CD8-positive, alpha-beta T cell (primary cell): ENCODE measurements at regions of chr12 and their contacts with region 1.

Region 1: GRCh38 chr12:52050761-52051541 is at the start of gene NR4A1:
- DNase-seq: peak; percentile 97 to 100 (median 99)
- ATAC-seq: peak; percentile 90
- H3K4me3 ChIP-seq: peak within 1 kb of the TSS; percentile 80 to 87
- H3K4me3 Mint-ChIP-seq: peak within 1 kb of the TSS; percentile 97
- H3K27ac ChIP-seq: peak within 1 kb of the TSS; percentile 81 to 99
- H3K27ac Mint-ChIP-seq: peak within 1 kb of the TSS; percentile 99
- H3K4me1 ChIP-seq: peaks cover 30% of the 10 kb centered on the region
- H3K4me1 Mint-ChIP-seq: peaks cover 35% of the 10 kb centered on the region
- H3K27me3 ChIP-seq: no peaks in the 10 kb centered on the region
- H3K27me3 Mint-ChIP-seq: peaks cover 3% of the 10 kb centered on the region
- CTCF ChIP-seq: no peak
- total RNA-seq, gene NR4A1: 59.7 to 60.0 TPM

Region 2: DNA sequence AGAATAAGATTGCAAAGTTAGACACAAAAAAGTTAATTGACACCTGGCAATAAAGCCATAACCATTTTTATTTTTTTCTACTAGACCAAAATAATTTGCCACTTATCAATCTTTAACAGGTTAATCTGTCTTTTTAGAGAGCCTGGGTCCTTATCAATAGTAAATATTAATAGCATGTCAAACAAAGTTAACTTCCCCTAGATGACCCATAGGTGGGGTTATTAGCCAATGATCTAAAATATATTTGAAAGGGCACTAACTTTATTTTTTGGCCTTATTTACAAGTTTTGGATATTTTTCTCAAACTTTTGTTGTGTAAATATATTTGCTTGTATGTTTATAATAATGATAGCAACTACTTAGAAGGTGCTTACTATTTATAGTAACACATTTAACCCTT is 159.1 kb before region 1 on chr12:
- CTCF ChIA-PET with region 1: no interaction called
- POLR2A ChIA-PET with region 1: no interaction called
- intact Hi-C with region 1: no loop called
- DNase-seq: no peak
- ATAC-seq: no peak
- H3K4me3 ChIP-seq: no peak overlapping the region
- H3K4me3 Mint-ChIP-seq: no peak overlapping the region
- H3K27ac ChIP-seq: no peak overlapping the region
- H3K27ac Mint-ChIP-seq: no peak overlapping the region
- H3K4me1 ChIP-seq: no peaks in the 10 kb centered on the region
- H3K4me1 Mint-ChIP-seq: no peaks in the 10 kb centered on the region
- H3K27me3 ChIP-seq: no peaks in the 10 kb centered on the region
- H3K27me3 Mint-ChIP-seq: peaks cover 2% of the 10 kb centered on the region
- CTCF ChIP-seq: no peak

Region 3: DNA sequence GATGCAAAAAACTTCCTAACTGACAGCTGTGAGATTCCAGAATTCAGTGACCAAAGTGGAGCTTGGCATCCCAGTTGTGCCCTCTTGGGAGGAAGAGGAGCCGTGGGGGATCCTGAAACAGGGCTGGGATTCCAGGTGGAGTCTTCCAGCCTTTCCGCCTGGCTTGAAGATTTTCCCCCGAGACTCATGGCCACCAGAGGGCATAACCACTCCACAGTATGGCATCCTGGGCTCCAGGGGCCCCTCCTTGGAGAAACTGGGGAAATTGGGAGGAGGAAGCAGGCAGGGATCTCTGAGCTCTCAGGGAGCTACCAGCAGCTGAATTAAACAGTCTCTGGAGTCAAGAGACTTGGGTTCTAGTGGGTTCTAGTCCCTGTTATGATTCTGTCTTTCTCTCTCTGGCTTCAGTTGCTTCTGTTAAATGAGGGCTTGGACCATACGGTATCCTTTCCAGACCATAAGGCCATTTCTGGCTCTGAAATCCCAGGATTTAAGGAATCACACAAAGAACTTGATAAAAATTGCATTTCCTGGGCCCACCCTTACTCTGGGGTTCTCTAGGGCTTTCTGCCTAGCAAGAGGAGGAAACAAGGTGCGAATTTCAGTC is 46.8 kb before region 1 on chr12:
- CTCF ChIA-PET with region 1: interaction called, 1,615 read pairs
- POLR2A ChIA-PET with region 1: interaction called, 3 read pairs
- intact Hi-C with region 1: loop called (anchors 1 kb)
- DNase-seq: peak in 2 of 9 experiments; percentile 33 to 48
- ATAC-seq: no peak
- H3K4me3 ChIP-seq: no peak overlapping the region
- H3K4me3 Mint-ChIP-seq: no peak overlapping the region
- H3K27ac ChIP-seq: no peak overlapping the region
- H3K27ac Mint-ChIP-seq: no peak overlapping the region
- H3K4me1 ChIP-seq: peaks cover 20% of the 10 kb centered on the region
- H3K4me1 Mint-ChIP-seq: peaks cover 18% of the 10 kb centered on the region
- H3K27me3 ChIP-seq: peaks cover 0 to 4% of the 10 kb centered on the region in 2 experiments
- H3K27me3 Mint-ChIP-seq: no peaks in the 10 kb centered on the region
- CTCF ChIP-seq: peak; percentile 34

Region 4: DNA sequence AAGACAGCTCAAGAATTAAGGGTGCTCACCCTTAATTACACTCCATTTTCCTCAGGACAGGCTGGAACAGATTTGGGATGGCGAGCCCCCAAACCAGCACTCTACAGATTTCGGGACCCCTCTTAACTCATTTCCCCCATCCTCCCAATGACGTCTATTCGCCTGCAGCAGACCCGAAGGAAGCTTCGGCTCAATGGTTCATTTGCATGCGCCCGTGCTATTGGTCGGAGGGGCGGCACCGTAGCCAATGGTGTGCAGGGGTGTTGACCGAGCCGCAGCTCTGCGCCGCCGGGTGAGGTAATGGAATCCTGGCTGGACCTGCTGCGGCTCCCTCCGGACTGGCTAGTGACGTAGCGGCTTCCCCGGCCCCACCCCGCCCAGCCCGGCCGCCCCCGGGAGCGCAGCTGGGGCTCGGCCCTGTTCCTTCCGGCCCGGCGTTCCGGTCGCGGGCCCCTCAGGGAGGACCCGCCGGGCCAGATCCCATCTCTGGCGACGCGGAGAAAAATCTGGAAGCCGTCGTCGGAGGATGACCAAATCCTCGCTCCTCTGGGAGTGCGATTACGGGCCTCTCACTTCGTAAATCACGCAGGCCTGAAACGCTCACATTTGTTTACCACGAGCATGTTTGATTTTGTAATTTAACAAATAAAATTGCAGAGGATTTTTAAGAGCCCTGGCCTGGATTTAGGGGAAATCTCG is 18.0 kb before region 1 on chr12:
- CTCF ChIA-PET with region 1: interaction called, 1,615 read pairs
- POLR2A ChIA-PET with region 1: interaction called, 13 read pairs
- intact Hi-C with region 1: loop called (anchors 1 kb)
- DNase-seq: peak; percentile 65 to 95 (median 85)
- ATAC-seq: peak; percentile 81
- H3K4me3 ChIP-seq: peak overlapping the region; percentile 38 to 56
- H3K4me3 Mint-ChIP-seq: peak overlapping the region; percentile 79
- H3K27ac ChIP-seq: peak overlapping the region; percentile 50 to 90
- H3K27ac Mint-ChIP-seq: peak overlapping the region; percentile 86
- H3K4me1 ChIP-seq: peaks cover 24% of the 10 kb centered on the region
- H3K4me1 Mint-ChIP-seq: peaks cover 31% of the 10 kb centered on the region
- H3K27me3 ChIP-seq: no peaks in the 10 kb centered on the region
- H3K27me3 Mint-ChIP-seq: no peaks in the 10 kb centered on the region
- CTCF ChIP-seq: no peak

Region 5: DNA sequence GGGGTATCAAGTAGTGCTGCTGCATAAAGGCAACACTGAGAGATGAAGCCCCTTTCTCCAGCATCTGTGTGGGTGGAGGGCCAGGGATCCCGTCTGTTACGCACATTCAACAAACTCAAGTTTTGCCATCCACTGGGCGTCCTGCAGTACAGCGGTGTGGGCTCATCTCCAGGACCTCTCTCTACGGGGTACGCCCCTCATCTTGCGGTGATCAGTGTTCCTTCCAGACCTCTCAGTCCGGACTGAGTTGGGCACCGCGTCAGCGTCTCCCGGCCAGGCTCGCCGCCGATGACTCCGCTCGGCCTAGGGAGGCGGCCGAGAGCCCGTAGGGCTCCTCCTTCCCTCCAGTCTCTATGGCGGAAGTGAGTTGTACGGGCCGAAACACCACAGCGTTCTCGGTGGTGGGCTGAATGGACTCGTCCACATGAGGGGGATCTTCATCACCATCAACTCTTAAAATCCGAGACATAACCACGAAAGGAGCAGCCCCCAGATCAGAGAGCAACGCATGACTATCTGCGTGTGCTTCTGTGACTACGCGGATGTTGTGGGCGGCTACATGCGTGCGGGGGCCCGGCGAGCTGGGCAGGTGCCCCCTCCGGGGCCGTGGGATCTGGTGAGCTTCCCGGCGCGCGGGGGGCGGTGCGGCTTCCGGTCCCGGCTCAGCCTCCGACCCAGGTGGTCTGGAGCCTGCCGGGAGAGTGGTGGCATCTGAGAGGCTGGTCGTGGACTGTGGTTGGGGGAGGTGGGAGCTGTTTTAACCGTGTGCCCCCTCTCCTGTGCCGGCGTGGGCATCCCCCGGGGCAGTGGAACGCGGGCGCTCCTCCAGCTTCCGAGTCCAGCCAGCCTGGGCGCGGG is 18.6 kb after region 1 on chr12 and contains the start of gene ATG101:
- CTCF ChIA-PET with region 1: interaction called, 8 read pairs
- POLR2A ChIA-PET with region 1: interaction called, 10 read pairs
- intact Hi-C with region 1: loop called (anchors 1 kb)
- DNase-seq: peak; percentile 72 to 96 (median 84)
- ATAC-seq: peak; percentile 93
- H3K4me3 ChIP-seq: peak within 1 kb of the TSS; percentile 93 to 98
- H3K4me3 Mint-ChIP-seq: peak within 1 kb of the TSS; percentile 98
- H3K27ac ChIP-seq: peak within 1 kb of the TSS; percentile 87 to 96
- H3K27ac Mint-ChIP-seq: peak within 1 kb of the TSS; percentile 99
- H3K4me1 ChIP-seq: peaks cover 33% of the 10 kb centered on the region
- H3K4me1 Mint-ChIP-seq: peaks cover 47% of the 10 kb centered on the region
- H3K27me3 ChIP-seq: no peaks in the 10 kb centered on the region
- H3K27me3 Mint-ChIP-seq: no peaks in the 10 kb centered on the region
- CTCF ChIP-seq: peak; percentile 47
- total RNA-seq, gene ATG101: 19.1 to 19.3 TPM